GM18951 (cell line): ENCODE measurements at regions of chrX and their contacts with region 1.

Region 1: DNA sequence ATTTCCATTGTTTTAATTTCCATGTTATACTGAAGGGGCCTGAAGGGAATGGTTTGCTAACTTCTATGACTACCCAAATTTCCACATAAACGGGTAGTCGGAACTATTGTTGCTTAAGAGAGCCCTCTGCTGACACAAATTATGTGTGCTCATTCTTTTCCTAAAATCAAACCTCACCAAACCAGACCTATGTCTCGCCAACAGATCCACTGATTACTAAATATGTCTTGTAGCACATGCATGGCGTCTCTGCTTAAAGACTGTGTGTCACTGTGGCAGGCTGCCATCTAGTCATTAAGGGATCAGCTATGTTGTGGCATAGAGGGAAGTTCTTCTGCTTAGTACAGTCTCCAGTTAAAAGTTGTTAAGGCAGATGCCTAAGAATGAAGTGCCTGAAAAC is 25.1 kb downstream of the PIR start:
- POLR2A ChIP-seq: no peak

Region 2: GRCh38 chrX:15349046-15349445 is 119.0 kb before region 1 on chrX:
- in situ Hi-C with region 1: loop called (anchors 10 kb)
- POLR2A ChIP-seq: no peak